ENCODE measurements at regions of chr1 and their contacts with region 1.

Region 1: DNA sequence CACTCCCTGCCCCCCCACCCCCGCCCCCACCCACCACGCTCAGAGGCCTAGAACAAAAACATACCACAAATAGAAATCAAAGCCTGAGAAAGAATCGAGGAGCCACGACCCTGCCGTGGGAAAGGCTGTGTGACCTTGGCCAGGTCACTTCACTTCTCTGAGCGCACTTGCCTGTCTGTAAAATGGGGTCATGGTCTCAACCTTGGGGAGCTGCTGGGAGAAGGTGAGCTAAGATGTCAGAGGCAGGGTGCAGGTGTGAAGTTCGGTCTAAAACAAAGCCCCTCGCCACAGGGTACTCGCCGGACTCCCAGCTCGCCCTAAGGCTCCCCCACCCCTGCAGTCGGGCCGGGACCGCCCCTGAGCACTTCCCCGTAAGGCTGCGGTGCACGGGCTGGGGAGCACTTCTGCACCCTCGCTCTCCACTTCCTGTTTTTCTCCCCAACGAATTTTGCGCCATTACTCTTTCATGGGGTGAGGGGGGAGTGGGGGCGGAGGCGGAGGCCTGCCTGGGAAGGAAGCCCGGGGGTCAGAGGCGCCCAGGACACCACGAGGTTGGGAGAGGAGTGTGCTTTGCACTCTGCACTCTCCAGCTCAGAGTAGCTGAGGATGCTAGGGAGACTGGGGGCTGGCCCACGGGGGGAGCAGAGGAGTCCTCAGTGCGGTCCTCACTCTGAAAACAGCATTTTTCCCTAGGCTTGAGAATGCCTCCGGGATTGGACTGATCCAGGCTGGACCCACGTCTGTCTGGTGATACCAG is 21.9 kb upstream of the PIK3CD start:
- DNase-seq: peak; percentile 53 to 86 (median 83)
- ATAC-seq: peak; percentile 69
- H3K4me3 ChIP-seq: peak overlapping the region; percentile 64
- H3K4me3 Mint-ChIP-seq: peak overlapping the region; percentile 90 to 100 (median 98)
- H3K27ac ChIP-seq: peak overlapping the region; percentile 87
- H3K27ac Mint-ChIP-seq: peak overlapping the region; percentile 85 to 98 (median 94)
- H3K4me1 ChIP-seq: peaks cover 35 to 38% of the 10 kb centered on the region in 2 donors
- H3K4me1 Mint-ChIP-seq: peaks cover 46 to 72% (median 65%) of the 10 kb centered on the region in 7 donors
- H3K27me3 ChIP-seq: no peaks in the 10 kb centered on the region
- H3K27me3 Mint-ChIP-seq: peaks cover 0 to 2% (median 0%) of the 10 kb centered on the region in 5 donors

Region 2: DNA sequence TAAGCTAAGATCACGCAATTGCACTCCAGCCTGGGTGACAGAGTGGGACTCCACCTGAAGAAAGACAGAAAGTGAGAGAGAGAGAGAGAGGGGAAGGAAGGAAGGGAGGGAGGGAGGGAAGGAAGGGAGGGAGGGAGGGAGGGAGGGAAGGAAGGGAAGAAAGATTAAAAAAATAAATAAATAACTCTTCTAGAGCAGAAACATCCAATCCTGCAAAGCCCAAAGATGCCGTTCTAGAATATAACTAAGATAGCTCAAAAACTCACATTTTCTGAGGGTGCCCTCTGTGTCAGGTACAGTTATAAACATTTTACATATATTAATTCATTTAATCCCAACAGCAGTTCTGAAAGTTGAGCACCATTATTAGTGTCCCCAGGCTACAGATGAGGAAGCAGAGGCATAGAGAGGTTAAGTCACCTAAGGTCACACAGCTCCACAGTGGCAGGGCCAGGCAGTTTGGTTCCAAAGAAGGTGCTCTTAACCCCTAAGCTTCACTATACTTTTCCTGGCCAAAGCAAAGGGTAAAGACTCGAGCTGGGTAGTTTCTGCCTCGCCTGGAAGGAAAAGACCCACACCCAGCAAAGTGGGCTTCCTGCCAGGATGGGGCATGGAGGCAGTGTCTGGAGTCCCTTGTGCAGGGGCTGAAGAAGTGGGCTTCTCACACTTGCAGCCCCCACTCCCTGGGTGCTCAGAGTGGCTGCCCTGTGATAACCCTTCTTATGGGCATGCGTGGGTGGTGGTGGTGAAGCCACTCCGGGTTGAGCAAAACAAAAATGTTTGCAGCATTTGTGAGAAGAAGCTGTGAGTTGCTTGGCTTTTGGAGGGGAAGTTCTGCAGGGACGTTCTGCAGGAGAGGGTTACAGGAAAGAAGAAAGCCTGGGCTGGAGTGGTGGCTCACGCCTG is 14.0 kb after region 1 on chr1:
- CTCF ChIA-PET with region 1: interaction called, 22 read pairs
- POLR2A ChIA-PET with region 1: interaction called, 439 read pairs
- intact Hi-C with region 1: loop called in 1 of 2 experiments (anchors 1 kb)
- DNase-seq: peak in 3 of 9 donors; percentile 10 to 55 (median 33)
- ATAC-seq: peak; percentile 43
- H3K4me3 ChIP-seq: no peak overlapping the region
- H3K4me3 Mint-ChIP-seq: peak overlapping the region; percentile 56 to 86 (median 76)
- H3K27ac ChIP-seq: peak overlapping the region; percentile 55
- H3K27ac Mint-ChIP-seq: peak overlapping the region; percentile 80 to 94 (median 90)
- H3K4me1 ChIP-seq: peaks cover 18 to 66% of the 10 kb centered on the region in 2 donors
- H3K4me1 Mint-ChIP-seq: peaks cover 46 to 83% (median 76%) of the 10 kb centered on the region in 7 donors
- H3K27me3 ChIP-seq: no peaks in the 10 kb centered on the region
- H3K27me3 Mint-ChIP-seq: no peaks in the 10 kb centered on the region

Region 3: GRCh38 chr1:9665193-9665592 is 35.6 kb after region 1 on chr1:
- CTCF ChIA-PET with region 1: interaction called, 13 read pairs
- POLR2A ChIA-PET with region 1: interaction called, 10 read pairs
- intact Hi-C with region 1: no loop called
- DNase-seq: no peak
- ATAC-seq: no peak
- H3K4me3 ChIP-seq: no peak overlapping the region
- H3K4me3 Mint-ChIP-seq: peak overlapping the region in 9 of 10 donors; percentile 8 to 70 (median 46)
- H3K27ac ChIP-seq: peak overlapping the region; percentile 29
- H3K27ac Mint-ChIP-seq: peak overlapping the region in 8 of 9 donors; percentile 52 to 92 (median 68)
- H3K4me1 ChIP-seq: peaks cover 18 to 26% of the 10 kb centered on the region in 2 donors
- H3K4me1 Mint-ChIP-seq: peaks cover 29 to 65% (median 55%) of the 10 kb centered on the region in 7 donors
- H3K27me3 ChIP-seq: no peaks in the 10 kb centered on the region
- H3K27me3 Mint-ChIP-seq: no peaks in the 10 kb centered on the region

Region 4: DNA sequence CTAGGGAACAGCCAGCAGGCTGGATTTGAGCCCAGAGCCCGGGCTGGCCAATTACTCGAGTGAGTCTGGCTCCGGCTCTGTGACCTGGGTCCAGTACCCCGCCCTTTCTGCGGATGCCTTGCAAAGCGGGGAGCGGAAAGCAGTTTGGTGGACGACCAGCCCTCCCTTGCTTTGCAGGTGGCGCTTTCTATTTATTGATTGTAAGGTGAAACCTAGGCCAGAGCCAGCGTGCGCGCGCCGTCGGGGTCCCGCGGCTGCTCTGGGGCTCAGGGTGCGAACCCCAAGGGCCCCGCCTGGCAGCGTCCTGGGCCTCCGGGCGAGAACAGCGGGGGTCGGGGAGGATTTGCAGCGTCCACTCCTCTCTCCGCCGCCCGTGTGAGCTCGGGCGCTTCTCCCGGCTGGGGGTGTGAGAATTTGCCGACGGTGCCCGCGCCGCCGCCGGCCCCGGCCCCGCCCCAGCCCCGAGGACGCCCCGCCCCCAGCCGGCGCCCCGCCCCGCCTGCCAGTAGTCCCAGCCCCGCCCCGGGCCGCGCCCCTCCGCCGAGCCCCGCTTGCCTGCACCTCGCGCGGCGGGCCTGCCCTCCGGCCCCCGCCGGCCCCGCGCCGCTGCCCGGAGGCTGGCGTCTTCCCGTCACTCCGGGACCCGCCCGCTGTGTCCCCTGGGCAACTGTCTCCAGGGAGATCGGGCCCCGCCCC is 59.5 kb after region 1 on chr1:
- CTCF ChIA-PET with region 1: interaction called, 28 read pairs
- POLR2A ChIA-PET with region 1: interaction called, 120 read pairs
- intact Hi-C with region 1: loop called (anchors 1 kb)
- DNase-seq: peak; percentile 62 to 89 (median 82)
- ATAC-seq: peak; percentile 93
- H3K4me3 ChIP-seq: peak overlapping the region; percentile 50
- H3K4me3 Mint-ChIP-seq: peak overlapping the region; percentile 80 to 90 (median 87)
- H3K27ac ChIP-seq: peak overlapping the region; percentile 70
- H3K27ac Mint-ChIP-seq: peak overlapping the region in 8 of 9 donors; percentile 59 to 90 (median 78)
- H3K4me1 ChIP-seq: peaks cover 53 to 59% of the 10 kb centered on the region in 2 donors
- H3K4me1 Mint-ChIP-seq: peaks cover 36 to 85% (median 73%) of the 10 kb centered on the region in 7 donors
- H3K27me3 ChIP-seq: no peaks in the 10 kb centered on the region
- H3K27me3 Mint-ChIP-seq: no peaks in the 10 kb centered on the region

Region 5: DNA sequence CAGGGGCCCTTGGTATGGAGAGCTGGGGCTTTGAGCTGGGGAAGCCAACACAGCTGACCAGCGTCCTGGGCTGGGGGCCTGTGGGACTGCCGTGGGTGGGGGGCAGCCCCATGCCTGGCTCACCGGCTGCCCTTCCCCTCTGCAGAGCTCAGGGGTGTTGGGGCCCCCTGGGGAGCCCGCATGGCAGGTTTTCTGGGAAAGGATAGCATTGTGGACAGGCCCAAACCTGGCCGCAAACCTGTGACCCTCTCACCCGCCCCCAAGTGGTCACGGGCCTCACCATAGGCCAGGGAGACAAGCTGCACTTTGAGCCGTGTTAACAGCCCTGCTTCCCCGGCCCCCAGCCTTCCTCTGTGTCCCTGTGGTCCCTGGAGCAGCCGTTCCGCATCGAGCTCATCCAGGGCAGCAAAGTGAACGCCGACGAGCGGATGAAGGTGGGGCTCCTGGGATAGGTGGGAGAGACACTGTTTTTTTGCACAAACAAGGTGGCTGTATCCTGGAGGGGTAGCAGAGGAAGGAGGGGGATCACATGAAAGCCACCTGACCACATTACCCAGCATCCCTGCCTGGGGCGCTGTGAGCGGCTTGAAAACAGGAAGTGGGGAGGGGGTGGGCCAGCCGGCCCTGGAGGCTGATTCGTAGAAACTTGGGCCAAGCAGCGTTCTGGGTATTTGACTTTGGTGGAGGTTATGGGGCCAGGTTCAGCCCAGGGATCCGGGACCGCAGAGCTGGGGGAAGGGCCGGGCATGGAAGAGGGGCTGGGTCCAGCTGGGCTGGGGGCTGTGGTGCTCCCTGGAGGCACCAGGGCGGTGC is 87.8 kb after region 1 on chr1:
- CTCF ChIA-PET with region 1: interaction called, 109 read pairs
- POLR2A ChIA-PET with region 1: interaction called, 320 read pairs
- intact Hi-C with region 1: loop called (anchors 1 kb)
- DNase-seq: peak; percentile 63 to 95 (median 94)
- ATAC-seq: peak; percentile 90
- H3K4me3 ChIP-seq: peak overlapping the region; percentile 76
- H3K4me3 Mint-ChIP-seq: peak overlapping the region; percentile 80 to 98 (median 94)
- H3K27ac ChIP-seq: peak overlapping the region; percentile 63
- H3K27ac Mint-ChIP-seq: peak overlapping the region; percentile 90 to 99 (median 95)
- H3K4me1 ChIP-seq: peaks cover 60 to 87% of the 10 kb centered on the region in 2 donors
- H3K4me1 Mint-ChIP-seq: peaks cover 26 to 82% (median 66%) of the 10 kb centered on the region in 7 donors
- H3K27me3 ChIP-seq: no peaks in the 10 kb centered on the region
- H3K27me3 Mint-ChIP-seq: no peaks in the 10 kb centered on the region

Region 6: GRCh38 chr1:9784508-9785133 is 155.0 kb after region 1 on chr1:
- CTCF ChIA-PET with region 1: interaction called, 4 read pairs
- POLR2A ChIA-PET with region 1: interaction called, 7 read pairs
- intact Hi-C with region 1: loop called in 1 of 2 experiments (anchors 1 kb)
- DNase-seq: peak; percentile 29 to 78 (median 71)
- ATAC-seq: peak; percentile 65
- H3K4me3 ChIP-seq: no peak overlapping the region
- H3K4me3 Mint-ChIP-seq: peak overlapping the region in 2 of 10 donors; percentile 28 to 38
- H3K27ac ChIP-seq: no peak overlapping the region
- H3K27ac Mint-ChIP-seq: peak overlapping the region in 5 of 9 donors; percentile 23 to 76 (median 49)
- H3K4me1 ChIP-seq: peaks cover 11 to 17% of the 10 kb centered on the region in 2 donors
- H3K4me1 Mint-ChIP-seq: peaks cover 11 to 41% (median 32%) of the 10 kb centered on the region in 7 donors
- H3K27me3 ChIP-seq: no peaks in the 10 kb centered on the region
- H3K27me3 Mint-ChIP-seq: no peaks in the 10 kb centered on the region

Region 7: GRCh38 chr1:9867408-9868243 is 238.0 kb after region 1 on chr1:
- CTCF ChIA-PET with region 1: interaction called, 37 read pairs
- POLR2A ChIA-PET with region 1: no interaction called
- intact Hi-C with region 1: loop called (anchors 1 kb)
- DNase-seq: peak; percentile 70 to 90 (median 84)
- ATAC-seq: peak; percentile 96
- H3K4me3 ChIP-seq: no peak overlapping the region
- H3K4me3 Mint-ChIP-seq: no peak overlapping the region
- H3K27ac ChIP-seq: no peak overlapping the region
- H3K27ac Mint-ChIP-seq: no peak overlapping the region
- H3K4me1 ChIP-seq: no peaks in the 10 kb centered on the region
- H3K4me1 Mint-ChIP-seq: peaks cover 0 to 7% (median 3%) of the 10 kb centered on the region in 7 donors
- H3K27me3 ChIP-seq: no peaks in the 10 kb centered on the region
- H3K27me3 Mint-ChIP-seq: no peaks in the 10 kb centered on the region

Measured in naive thymus-derived CD4-positive, alpha-beta T cell (primary cell).